ENCODE measurements at regions of chr16 and their contacts with region 1.

Region 1: GRCh38 chr16:4475880-4476788 is at the start of gene HMOX2:
- DNase-seq: peak; percentile 92
- H3K4me3 Mint-ChIP-seq: peak within 1 kb of the TSS; percentile 80
- H3K27ac Mint-ChIP-seq: peak within 1 kb of the TSS; percentile 63
- H3K4me1 Mint-ChIP-seq: peaks cover 6% of the 10 kb centered on the region
- H3K27me3 Mint-ChIP-seq: no peaks in the 10 kb centered on the region
- CTCF ChIP-seq: peak; percentile 41
- total RNA-seq, gene HMOX2: 60.4 and 65.6 TPM in 2 replicates

Region 2: DNA sequence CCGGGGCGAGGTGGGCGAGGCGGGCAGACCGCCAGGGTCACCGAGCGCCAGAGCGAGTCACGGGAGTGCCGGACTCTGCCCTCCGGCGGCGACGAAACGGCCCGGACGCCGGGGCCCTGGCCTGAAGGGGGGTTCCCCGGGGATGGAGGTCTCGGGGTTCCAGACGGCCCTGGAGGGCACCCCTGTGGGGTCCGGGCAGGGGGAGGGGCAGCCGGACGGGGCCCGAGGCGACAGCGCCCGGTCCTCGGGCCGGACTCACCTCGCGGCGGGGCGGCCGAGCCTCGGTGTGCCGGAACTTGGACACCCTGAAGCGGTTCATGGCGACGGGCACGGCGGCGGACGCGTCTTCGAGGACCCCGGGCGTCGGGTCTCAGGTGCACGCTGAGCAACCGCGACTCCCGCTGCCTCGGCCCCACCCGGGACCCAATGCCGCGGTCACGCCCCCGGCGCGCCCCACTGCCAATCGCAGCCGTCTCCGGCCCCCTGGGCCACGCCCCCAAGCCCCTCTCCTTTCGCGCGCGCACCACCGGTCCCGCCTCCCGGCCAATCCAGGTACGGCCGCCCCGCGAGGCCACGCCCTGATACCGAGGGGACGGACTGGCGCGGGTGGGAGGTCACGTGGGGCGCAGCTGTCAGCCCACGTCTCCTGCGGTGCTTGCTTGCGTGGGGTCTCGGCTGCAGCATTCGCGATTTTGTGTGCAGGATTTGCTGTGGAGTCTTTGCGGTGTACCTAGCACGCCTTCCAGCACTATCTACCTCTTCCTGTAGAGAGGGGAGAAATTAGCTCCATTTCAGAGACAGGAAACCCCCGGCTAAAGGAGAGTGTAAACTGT is 59.7 kb before region 1 on chr16 and contains the start of gene CORO7:
- CTCF ChIA-PET with region 1: interaction called, 13 read pairs
- POLR2A ChIA-PET with region 1: interaction called, 4 read pairs
- intact Hi-C with region 1: no loop called
- DNase-seq: peak; percentile 87
- H3K4me3 Mint-ChIP-seq: peak within 1 kb of the TSS; percentile 86
- H3K27ac Mint-ChIP-seq: peak within 1 kb of the TSS; percentile 60
- H3K4me1 Mint-ChIP-seq: peaks cover 14% of the 10 kb centered on the region
- H3K27me3 Mint-ChIP-seq: no peaks in the 10 kb centered on the region
- CTCF ChIP-seq: no peak
- total RNA-seq, gene CORO7: 20.3 and 24.9 TPM in 2 replicates

Region 3: DNA sequence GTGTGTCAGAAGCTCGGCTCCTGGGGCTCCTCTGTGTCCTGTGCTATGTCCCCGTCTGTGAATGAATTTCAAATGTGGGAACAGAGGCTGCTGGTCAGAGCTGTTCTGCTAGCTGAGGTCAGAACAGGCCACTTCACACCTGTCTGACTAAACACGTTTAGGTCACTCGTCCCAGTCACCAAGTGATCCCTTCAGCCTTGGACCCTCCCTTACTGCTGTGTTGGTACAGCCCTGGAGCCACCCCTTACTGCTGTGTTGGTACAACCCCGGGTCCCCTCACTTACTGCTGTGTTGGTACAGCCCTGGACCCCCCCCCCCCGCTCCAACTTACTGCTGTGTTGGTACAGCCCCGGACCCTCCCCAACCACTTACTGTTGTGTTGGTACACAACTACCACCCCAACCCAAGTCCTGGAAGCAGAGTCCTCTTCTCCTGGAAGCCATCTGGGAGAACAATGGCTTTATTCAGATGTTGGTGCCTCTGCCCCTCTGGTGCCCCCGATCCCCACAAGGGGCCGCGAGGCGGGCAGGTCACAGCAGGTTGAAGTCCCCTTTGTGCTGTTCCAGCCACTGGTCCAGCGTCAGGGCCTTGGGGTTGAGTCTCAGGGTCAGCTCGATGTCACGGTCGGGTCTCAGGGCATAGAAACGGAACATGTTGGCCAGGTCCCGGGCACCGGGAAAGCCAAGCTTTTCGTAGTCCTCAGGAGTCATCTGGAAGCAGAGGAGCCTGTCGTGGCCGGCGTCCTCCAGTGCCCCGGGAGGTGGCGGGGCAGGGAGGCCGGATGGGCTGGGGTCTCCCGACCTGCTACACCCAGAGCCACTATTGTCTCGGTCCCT is 14.7 kb before region 1 on chr16:
- CTCF ChIA-PET with region 1: interaction called, 13 read pairs
- POLR2A ChIA-PET with region 1: interaction called, 40 read pairs
- intact Hi-C with region 1: no loop called
- DNase-seq: no peak
- H3K4me3 Mint-ChIP-seq: no peak overlapping the region
- H3K27ac Mint-ChIP-seq: no peak overlapping the region
- H3K4me1 Mint-ChIP-seq: peaks cover 18% of the 10 kb centered on the region
- H3K27me3 Mint-ChIP-seq: no peaks in the 10 kb centered on the region
- CTCF ChIP-seq: no peak

Region 4: DNA sequence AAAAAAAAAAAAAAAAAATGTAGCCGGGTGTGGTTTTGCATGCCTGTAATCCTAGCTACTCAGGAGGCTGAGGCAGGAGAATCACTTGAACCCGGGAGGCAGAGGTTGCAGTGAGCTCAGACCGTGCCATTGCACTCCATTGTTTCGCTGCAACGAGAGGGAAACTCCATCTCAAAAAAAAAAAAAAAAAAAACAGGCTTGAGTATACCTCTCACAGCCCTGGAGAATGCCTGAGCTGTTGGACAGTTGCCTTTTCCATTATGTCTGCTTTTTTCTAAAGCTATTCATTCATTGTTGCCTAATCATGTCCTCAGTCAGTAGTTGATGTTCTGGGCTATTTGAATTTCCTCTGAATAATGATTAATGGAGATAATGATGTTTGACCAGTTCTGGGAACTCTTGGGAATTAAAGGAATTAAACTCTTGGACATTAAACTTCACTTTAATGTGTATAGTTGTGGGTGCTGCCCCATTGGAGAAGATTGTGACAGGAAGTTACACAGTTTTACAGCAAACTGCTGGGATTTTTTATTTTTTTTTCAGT is 11.9 kb after region 1 on chr16:
- CTCF ChIA-PET with region 1: interaction called, 7 read pairs
- POLR2A ChIA-PET with region 1: interaction called, 42 read pairs
- intact Hi-C with region 1: no loop called
- DNase-seq: no peak
- H3K4me3 Mint-ChIP-seq: no peak overlapping the region
- H3K27ac Mint-ChIP-seq: no peak overlapping the region
- H3K4me1 Mint-ChIP-seq: peaks cover 5% of the 10 kb centered on the region
- H3K27me3 Mint-ChIP-seq: no peaks in the 10 kb centered on the region
- CTCF ChIP-seq: no peak

Region 5: DNA sequence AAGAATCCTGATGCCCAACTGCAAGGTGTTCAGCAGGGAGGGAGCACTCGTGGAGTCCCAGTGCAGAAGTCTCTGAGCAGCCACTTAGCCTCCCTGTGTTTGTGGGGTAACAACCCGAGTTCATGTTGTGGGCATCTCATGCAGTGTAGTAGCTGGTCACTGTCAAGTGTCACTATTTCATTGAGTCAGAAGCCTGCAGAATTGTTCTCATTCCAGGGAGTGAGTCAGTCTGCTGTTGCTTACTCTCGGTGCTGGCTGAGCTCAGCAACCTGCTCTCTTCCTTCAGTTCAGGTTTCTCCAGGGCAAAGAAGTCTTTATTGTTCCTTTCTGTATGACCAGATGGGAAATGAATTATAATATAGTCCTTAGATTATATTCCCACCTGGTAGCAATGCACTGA is 24.1 kb after region 1 on chr16:
- CTCF ChIA-PET with region 1: interaction called, 8 read pairs
- POLR2A ChIA-PET with region 1: interaction called, 63 read pairs
- intact Hi-C with region 1: no loop called
- DNase-seq: peak; percentile 66
- H3K4me3 Mint-ChIP-seq: no peak overlapping the region
- H3K27ac Mint-ChIP-seq: no peak overlapping the region
- H3K4me1 Mint-ChIP-seq: peaks cover 44% of the 10 kb centered on the region
- H3K27me3 Mint-ChIP-seq: no peaks in the 10 kb centered on the region
- CTCF ChIP-seq: no peak

Measured in MCF 10A (cell line).